ENCODE measurements at regions of chr9 and their contacts with region 1.

Region 1: GRCh38 chr9:114518599-114519022 is 13.3 kb upstream of the WHRN start:
- DNase-seq: no peak
- H3K4me3 Mint-ChIP-seq: no peak overlapping the region
- H3K27ac Mint-ChIP-seq: no peak overlapping the region
- H3K4me1 Mint-ChIP-seq: no peaks in the 10 kb centered on the region
- H3K27me3 Mint-ChIP-seq: peaks cover 6% of the 10 kb centered on the region
- CTCF ChIP-seq: no peak

Region 2: GRCh38 chr9:114505187-114506081 is 13.2 kb before region 1 on chr9 and contains the start of gene WHRN:
- CTCF ChIA-PET with region 1: interaction called, 23 read pairs
- POLR2A ChIA-PET with region 1: interaction called, 3 read pairs
- intact Hi-C with region 1: no loop called
- DNase-seq: peak; percentile 86
- H3K4me3 Mint-ChIP-seq: peak within 1 kb of the TSS; percentile 85
- H3K27ac Mint-ChIP-seq: peak within 1 kb of the TSS; percentile 94
- H3K4me1 Mint-ChIP-seq: peaks cover 27% of the 10 kb centered on the region
- H3K27me3 Mint-ChIP-seq: peaks cover 29% of the 10 kb centered on the region
- CTCF ChIP-seq: no peak
- total RNA-seq, gene WHRN: 9.4 and 12.8 TPM in 2 replicates

Region 3: DNA sequence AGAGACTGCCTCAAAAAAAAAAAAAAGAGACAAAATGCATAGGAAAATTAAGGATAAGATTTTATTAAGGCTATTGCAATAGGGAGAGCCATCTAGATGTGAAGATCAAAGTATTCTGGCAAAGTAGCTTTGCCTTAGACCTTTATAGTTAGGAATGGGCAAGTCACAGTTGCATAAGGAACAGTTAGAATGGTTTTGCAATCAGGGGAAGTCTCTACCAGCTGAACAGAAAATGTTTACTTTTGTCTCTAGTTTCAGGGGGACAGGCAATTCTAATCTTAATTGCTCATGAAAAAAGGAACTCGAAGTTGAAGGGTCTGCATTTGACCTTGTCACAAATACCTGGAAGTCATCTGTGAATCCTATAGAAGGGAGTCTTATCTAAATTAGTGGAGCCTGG is 55.8 kb after region 1 on chr9:
- CTCF ChIA-PET with region 1: no interaction called
- POLR2A ChIA-PET with region 1: no interaction called
- intact Hi-C with region 1: no loop called
- DNase-seq: no peak
- H3K4me3 Mint-ChIP-seq: no peak overlapping the region
- H3K27ac Mint-ChIP-seq: no peak overlapping the region
- H3K4me1 Mint-ChIP-seq: no peaks in the 10 kb centered on the region
- H3K27me3 Mint-ChIP-seq: no peaks in the 10 kb centered on the region
- CTCF ChIP-seq: no peak

Region 4: DNA sequence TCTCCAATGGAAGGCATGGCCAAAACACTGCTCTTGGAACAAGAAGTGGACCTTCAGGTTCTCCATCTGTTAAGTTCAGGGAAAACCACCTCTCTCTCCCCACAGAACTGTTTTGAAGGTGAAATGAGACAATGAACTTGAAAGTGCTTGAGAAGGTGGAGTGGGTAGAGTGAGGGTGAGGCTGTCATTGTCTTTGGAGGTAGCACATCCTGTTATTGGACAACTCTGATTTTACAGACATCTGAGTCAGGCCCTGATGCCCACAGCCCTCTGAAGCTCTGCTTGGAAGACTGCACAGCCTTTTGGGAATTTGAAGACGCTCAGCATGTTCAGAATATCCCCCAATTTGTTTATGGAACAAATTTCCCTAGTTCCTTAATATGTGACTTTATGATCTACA is 191.0 kb after region 1 on chr9:
- CTCF ChIA-PET with region 1: no interaction called
- POLR2A ChIA-PET with region 1: no interaction called
- intact Hi-C with region 1: no loop called
- DNase-seq: no peak
- H3K4me3 Mint-ChIP-seq: no peak overlapping the region
- H3K27ac Mint-ChIP-seq: no peak overlapping the region
- H3K4me1 Mint-ChIP-seq: no peaks in the 10 kb centered on the region
- H3K27me3 Mint-ChIP-seq: no peaks in the 10 kb centered on the region
- CTCF ChIP-seq: no peak